Activated B cell treated with CpG ODN at 0.5 μM for 24 hours (primary cell): ENCODE measurements at regions of chr19 and their contacts with region 1.

Region 1: DNA sequence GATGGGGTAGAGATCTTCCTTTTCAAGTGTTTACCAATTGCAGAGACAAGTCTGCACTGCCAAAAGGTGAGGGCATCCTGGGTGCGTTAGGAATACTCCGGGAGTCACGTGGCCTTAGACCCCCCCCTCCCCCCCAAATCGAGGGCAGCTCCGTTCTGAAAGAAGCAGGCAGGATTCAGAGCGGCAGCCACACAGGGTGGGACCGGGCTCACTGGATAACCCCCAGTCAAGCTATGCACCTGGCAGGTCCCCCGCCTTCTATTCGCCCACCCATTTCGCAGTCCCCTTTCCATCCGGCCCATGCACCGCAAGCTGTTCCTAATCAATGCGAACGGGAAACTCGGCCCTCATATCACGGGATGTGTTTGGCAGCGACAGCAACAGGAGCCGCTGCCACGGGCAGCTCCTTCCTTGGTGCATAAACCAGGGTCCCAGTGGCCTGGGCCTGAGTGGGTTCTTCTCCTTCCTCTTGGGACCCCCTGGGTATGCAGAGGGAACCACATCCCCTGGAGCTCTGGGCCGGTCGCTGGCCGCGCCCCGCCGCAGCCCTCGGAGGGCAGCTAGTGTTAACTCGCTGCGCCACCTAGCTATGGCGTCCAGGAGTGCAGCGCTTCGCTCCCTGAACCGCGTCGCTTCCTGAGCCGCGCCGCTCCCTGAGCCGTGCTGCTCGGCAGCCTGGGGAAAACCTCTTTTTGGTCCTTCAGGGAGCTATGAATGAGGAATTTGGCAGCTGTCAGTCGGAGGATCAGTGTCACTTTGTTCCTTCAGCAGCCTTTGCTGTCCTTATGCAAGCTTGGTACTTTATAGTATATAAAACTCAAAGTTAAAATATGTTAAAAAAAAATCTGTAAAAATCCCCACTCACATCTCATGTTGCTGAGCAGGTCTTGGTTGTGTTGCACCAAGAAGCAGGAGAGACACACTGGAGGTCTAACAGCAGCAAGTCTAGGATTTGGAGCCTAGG is 41.4 kb downstream of the LYL1 start:
- DNase-seq: peak; percentile 74
- ATAC-seq: peak; percentile 99
- H3K4me3 Mint-ChIP-seq: peak overlapping the region; percentile 81
- H3K27ac Mint-ChIP-seq: no peak overlapping the region
- H3K4me1 Mint-ChIP-seq: peaks cover 5% of the 10 kb centered on the region
- H3K27me3 Mint-ChIP-seq: peaks cover 14% of the 10 kb centered on the region
- CTCF ChIP-seq: peak; percentile 93

Region 2: DNA sequence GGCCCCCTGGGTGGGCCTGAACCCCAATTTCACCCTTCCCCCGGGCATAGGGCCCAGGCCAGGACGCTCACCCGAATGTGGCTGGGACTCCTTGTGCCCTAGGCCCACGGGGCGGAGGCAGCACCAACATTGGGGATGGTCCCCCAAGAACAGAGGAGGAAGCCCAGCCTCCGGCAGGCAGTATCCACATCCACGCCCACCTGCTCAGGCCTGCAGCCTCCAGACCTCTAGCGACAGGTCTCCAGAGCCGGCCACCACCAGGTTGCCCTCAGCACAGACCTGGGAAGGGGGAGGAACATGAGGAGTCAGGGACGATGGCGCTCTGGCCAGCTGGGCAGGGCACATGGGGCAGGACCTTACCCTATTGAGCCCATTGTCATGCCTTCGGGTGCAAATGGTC is 372.2 kb before region 1 on chr19:
- CTCF ChIA-PET with region 1: no interaction called
- POLR2A ChIA-PET with region 1: no interaction called
- intact Hi-C with region 1: no loop called
- DNase-seq: no peak
- ATAC-seq: no peak
- H3K4me3 Mint-ChIP-seq: no peak overlapping the region
- H3K27ac Mint-ChIP-seq: no peak overlapping the region
- H3K4me1 Mint-ChIP-seq: no peaks in the 10 kb centered on the region
- H3K27me3 Mint-ChIP-seq: no peaks in the 10 kb centered on the region
- CTCF ChIP-seq: no peak

Region 3: DNA sequence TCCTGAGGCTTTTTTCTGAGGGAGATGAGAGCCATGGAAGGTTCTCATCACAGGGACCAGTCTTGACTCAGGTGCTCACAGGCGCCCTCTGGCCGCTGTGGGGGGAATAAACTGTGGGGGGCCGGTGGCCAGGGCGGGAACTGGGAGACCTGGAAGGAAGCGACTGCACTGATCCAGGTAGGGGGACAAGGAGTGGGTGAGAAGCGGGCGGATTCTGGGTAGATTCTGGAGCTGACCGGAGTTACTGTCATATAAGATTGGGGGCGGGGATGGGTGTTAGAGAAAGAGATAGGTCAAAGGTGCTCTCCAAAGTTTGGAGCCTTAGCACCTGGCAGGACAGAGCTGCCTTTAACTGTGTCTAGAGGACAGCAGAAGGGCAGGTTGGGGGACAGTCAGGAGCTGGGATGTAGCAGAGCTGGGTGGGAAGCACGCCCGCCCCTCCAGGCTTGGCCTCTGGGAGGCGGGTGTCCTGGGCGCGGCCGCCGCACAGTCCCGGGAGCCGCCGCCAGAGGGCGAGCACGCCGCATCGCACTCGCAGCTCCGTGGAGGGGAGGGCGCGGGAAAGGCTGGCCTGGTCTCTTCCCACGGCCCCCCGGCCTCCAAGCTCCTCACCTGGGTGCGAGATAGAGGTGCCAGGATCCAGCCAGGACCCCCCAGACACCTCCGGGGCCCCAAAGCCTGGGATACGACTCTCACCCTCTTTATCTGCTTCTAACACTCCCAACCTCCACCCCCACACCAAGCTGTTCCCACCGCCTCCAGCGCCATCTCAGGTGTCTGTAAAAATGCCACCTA is 96.0 kb before region 1 on chr19:
- CTCF ChIA-PET with region 1: interaction called, 25 read pairs
- POLR2A ChIA-PET with region 1: interaction called, 5 read pairs
- intact Hi-C with region 1: no loop called
- DNase-seq: peak; percentile 91
- ATAC-seq: peak; percentile 97
- H3K4me3 Mint-ChIP-seq: peak overlapping the region; percentile 87
- H3K27ac Mint-ChIP-seq: peak overlapping the region; percentile 69
- H3K4me1 Mint-ChIP-seq: peaks cover 7% of the 10 kb centered on the region
- H3K27me3 Mint-ChIP-seq: no peaks in the 10 kb centered on the region
- CTCF ChIP-seq: no peak

Region 4: GRCh38 chr19:12983542-12984142 is 77.6 kb before region 1 on chr19:
- CTCF ChIA-PET with region 1: interaction called, 78 read pairs
- POLR2A ChIA-PET with region 1: interaction called, 7 read pairs
- intact Hi-C with region 1: loop called (anchors 1 kb)
- DNase-seq: peak; percentile 94
- ATAC-seq: peak; percentile 78
- H3K4me3 Mint-ChIP-seq: no peak overlapping the region
- H3K27ac Mint-ChIP-seq: no peak overlapping the region
- H3K4me1 Mint-ChIP-seq: peaks cover 5% of the 10 kb centered on the region
- H3K27me3 Mint-ChIP-seq: peaks cover 3% of the 10 kb centered on the region
- CTCF ChIP-seq: peak; percentile 65

Region 5: DNA sequence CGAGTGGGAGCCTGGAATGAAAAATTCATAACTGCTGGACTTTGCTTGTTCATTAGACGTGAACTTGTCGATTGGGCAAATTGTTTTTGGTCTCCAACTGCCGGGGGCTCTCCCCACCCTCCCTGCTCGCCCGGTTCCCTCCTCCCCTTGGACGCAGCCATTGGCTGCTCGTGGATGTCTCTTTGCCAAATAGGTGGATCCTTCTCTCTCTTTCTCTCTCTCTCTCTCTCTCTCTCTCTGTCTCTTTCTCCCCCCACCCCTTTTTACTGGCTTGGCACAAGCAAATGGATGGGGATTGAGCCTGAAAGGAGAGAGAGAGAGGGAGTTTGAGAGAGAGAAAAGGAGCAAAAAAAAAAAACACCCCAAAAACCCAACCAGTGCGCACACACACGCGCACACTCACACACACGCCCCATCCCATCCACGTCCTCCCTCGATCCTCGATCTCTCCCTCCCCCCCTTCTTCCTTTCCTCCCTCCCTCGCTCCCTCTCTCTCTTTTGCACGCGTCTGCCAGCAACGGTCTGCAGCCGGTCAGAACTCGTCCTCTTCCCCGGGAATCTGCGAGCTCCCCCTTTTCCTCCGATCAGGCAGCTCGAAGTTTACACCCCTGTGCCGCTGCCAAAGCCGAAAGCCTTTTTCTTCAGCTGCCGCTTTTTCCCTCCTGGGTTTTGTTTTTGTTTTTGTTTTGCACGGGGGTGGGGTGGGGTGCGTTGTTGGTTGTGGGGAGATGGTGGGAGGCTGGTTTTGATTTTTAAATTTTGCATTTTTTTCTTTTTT is 38.2 kb before region 1 on chr19:
- CTCF ChIA-PET with region 1: interaction called, 9 read pairs
- POLR2A ChIA-PET with region 1: no interaction called
- intact Hi-C with region 1: loop called (anchors 5 kb)
- DNase-seq: no peak
- ATAC-seq: peak; percentile 34
- H3K4me3 Mint-ChIP-seq: peak overlapping the region; percentile 80
- H3K27ac Mint-ChIP-seq: no peak overlapping the region
- H3K4me1 Mint-ChIP-seq: peaks cover 30% of the 10 kb centered on the region
- H3K27me3 Mint-ChIP-seq: peaks cover 29% of the 10 kb centered on the region
- CTCF ChIP-seq: no peak

Region 6: DNA sequence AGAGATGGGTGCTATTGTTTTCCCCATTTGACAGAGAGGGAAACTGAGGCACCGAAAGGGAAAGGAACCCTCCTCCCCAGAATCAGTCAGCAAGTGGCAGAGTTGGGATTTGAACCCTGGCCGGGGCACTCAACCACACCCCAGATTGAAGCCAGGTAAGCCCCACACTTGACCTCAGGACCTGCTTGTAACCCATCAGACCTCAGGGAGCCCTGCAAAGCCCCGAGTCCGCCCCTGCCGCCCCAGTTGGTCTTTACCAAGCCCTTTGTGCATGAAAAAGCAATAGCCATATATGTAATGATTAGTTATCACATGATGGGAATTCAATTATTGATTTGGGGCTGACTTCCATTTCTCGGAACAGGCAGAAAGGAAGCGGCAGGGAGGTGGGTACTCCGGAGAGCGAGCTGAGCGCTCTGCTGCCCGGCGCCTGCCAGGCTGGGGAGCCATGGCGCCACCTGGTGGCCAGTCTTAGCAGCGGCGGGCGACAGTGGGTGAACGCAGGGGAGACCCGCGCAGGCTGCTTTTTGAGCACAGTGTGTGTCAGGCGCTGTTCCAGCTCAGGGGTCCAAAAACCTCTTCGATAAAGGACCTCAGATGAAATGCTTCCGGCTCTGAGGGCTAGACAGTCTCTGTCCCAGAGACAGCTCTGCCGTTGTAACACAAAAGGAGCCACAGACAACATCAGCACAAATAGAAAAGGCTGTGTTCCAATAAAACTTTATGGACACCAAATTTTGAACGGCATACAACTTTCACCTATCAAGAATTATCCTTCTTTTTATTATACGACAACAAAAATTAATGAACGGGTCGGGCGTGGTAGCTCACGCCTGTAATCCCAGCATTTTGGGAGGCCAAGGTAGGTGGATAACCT is 527.9 kb after region 1 on chr19:
- CTCF ChIA-PET with region 1: no interaction called
- POLR2A ChIA-PET with region 1: no interaction called
- intact Hi-C with region 1: loop called (anchors 10 kb)
- DNase-seq: peak; percentile 82
- ATAC-seq: peak; percentile 95
- H3K4me3 Mint-ChIP-seq: no peak overlapping the region
- H3K27ac Mint-ChIP-seq: no peak overlapping the region
- H3K4me1 Mint-ChIP-seq: peaks cover 4% of the 10 kb centered on the region
- H3K27me3 Mint-ChIP-seq: peaks cover 15% of the 10 kb centered on the region
- CTCF ChIP-seq: peak; percentile 43